Activated T-helper 1 cell treated with anti-CD3 and anti-CD28 coated beads, Interleukin-12 subunit alpha, Interleukin-12 subunit beta, Interleukin-2, Interleukin-4 antibody, amounts not matched to agents 30 ng/mL and 10 ng/mL and 1 ng/mL, durations not matched to agents 14 hours and 24 hours and 36 hours (primary cell): ENCODE measurements at regions of chr2 and their contacts with region 1.

Region 1: GRCh38 chr2:9613291-9613690 is 17.5 kb downstream of the YWHAQ start:
- DNase-seq: no peak
- H3K4me3 Mint-ChIP-seq: no peak overlapping the region
- H3K27ac Mint-ChIP-seq: no peak overlapping the region
- H3K4me1 Mint-ChIP-seq: peaks cover 92% of the 10 kb centered on the region
- H3K27me3 Mint-ChIP-seq: no peaks in the 10 kb centered on the region

Region 2: DNA sequence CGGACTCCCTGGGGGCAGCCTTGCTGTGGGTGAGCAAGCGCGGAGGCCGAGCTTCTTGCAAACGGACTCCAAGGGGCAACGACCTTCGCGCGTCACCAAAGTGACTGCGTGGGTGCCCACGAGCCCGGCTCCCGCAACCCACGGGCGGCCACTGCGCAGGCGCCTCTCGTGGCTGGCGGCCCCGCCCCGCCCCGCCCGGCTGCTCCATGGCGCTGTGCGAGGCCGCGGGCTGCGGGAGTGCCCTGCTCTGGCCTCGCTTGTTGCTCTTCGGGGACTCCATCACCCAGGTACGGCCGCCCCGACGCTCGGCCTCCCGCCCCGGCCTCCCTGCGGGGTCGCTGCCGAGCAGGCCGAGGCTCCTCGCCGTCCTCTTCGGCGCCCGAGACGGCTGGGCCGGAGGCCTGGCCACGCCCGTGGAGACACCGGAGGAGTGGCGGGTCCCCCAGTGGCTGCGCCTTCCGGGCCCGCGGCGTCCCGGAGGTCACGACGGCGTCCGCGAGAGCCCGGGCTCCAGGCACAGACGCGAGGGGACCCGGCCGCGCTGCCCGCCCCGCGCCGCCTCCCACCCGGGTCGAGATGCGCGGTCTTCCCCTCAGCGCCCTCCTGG is 138.8 kb before region 1 on chr2 and contains the start of gene IAH1:
- intact Hi-C with region 1: loop called (anchors 1 kb)
- DNase-seq: peak; percentile 70
- H3K4me3 Mint-ChIP-seq: peak within 1 kb of the TSS; percentile 84
- H3K27ac Mint-ChIP-seq: peak within 1 kb of the TSS; percentile 84
- H3K4me1 Mint-ChIP-seq: peaks cover 48% of the 10 kb centered on the region
- H3K27me3 Mint-ChIP-seq: no peaks in the 10 kb centered on the region
- total RNA-seq, gene IAH1: 78.6 and 89.3 TPM in 2 replicates

Region 3: DNA sequence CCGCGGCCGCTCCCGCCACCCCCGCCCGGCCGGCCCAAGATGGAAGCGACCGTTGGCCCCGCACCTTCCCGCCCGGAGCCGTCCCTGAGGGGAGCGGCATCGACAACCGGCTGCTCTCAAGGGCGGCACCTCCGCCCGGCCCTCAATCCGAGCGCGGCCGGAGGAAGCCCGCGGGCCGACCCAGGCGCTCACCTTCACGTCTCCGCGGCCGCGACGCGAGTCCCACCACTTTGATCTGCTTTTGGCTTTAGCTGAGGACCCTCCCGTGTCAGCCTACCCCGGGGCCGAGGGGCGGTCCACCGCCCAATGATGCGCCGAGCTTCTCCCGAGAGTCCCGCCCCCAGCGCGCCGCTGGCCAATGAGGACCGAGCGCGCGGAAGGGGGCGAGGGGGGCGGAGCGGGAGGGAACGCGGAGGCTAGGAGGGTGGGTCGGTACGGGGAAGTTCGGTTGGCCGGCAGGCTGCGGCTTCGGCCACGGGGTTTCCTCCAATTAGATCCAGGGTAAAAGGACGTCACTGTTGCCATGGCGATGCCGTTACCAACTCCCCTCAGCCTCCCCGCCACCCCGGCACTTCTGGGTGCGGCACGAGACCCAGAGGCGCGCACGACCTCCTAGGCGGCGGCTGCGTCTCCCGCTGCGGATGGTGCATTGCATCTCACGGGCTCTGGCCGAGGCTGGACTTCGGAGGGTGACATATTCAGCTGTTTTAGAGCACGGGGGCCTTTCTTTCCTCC is 17.6 kb after region 1 on chr2 and contains the start of gene YWHAQ:
- intact Hi-C with region 1: loop called (anchors 1 kb)
- DNase-seq: peak; percentile 97
- H3K4me3 Mint-ChIP-seq: peak within 1 kb of the TSS; percentile 97
- H3K27ac Mint-ChIP-seq: peak within 1 kb of the TSS; percentile 93
- H3K4me1 Mint-ChIP-seq: peaks cover 45% of the 10 kb centered on the region
- H3K27me3 Mint-ChIP-seq: peaks cover 9% of the 10 kb centered on the region
- total RNA-seq, gene YWHAQ: 290 and 311 TPM in 2 replicates

Region 4: GRCh38 chr2:9697909-9698308 is 84.6 kb after region 1 on chr2:
- intact Hi-C with region 1: loop called (anchors 1 kb)
- DNase-seq: no peak
- H3K4me3 Mint-ChIP-seq: peak overlapping the region; percentile 1
- H3K27ac Mint-ChIP-seq: peak overlapping the region; percentile 85
- H3K4me1 Mint-ChIP-seq: peaks cover 41% of the 10 kb centered on the region
- H3K27me3 Mint-ChIP-seq: no peaks in the 10 kb centered on the region

Region 5: DNA sequence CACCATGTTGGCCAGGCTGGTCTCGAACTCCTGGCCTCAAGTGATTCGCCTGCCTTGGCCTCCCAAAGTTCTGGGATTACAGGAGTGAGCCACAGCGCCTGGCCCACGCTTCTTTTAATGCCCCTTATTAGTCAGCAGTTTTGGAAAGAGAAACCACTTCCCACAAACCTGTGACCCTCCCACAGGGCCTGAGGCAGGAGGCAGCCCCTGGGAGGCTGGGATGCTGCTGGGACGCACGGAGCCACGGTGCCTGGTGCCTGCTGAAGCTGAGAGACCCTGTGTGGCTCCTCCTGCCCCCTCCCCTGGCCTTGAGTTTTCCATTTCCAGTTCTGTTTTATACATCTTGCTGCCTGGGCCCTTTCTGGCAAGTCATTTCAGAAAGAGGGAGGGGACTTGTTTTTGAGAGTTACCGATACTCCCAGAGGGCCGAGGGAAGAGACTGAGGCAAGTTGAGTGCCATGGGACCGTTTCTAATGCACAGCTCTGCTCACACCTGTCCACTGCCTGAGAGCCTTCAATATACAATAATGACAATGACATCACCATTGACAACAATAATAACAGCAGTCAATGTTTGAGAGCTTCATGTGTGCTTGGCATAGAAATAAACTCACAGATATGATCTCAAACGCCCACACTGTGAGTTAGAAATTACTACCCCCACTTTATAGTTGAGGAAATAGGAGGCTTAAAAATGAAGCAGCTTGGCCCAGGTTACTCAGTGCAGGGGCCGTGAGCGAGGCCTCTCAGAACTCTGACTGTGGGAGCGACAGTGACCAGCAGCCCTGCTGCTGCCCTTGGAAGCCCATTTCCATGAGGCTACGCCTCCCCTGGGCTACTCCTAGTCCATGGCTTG is 95.6 kb after region 1 on chr2:
- intact Hi-C with region 1: loop called (anchors 1 kb)
- DNase-seq: no peak
- H3K4me3 Mint-ChIP-seq: no peak overlapping the region
- H3K27ac Mint-ChIP-seq: peak overlapping the region; percentile 86
- H3K4me1 Mint-ChIP-seq: peaks cover 58% of the 10 kb centered on the region
- H3K27me3 Mint-ChIP-seq: no peaks in the 10 kb centered on the region